Naive thymus-derived CD4-positive, alpha-beta T cell (primary cell): ENCODE measurements at regions of chr1 and their contacts with region 1.

Region 1: DNA sequence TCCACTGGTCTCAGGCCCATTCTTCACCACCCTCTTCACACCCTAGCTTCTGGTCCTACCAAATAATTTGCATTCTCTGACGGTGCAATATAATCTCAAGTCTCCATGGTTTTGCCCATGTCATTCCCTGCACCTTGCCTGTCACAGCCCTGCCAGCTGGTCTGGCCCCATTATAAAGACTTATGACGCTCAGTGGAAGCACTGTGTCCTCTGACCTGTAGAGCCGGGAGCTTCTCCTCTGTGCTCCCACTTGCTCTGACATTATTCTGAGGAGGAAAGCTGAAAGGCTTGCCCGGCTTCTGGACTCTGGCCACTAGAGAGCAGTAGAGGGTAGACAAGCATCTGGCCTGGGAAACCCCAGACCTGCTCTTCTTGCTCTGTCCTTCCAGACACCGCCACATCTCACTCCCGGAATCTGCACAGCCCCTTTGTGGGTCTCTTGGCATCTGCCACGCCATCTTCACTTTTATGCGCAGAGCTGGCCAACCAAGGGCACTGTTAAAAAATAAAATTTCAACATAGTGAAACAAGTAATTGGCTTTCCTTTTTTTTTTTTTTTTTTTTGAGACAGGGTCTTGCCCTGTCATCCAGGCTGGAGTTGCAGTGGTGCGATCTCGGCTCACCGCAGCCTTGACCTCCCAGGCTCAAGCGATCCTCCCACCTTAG is 44.4 kb downstream of the NENF start:
- DNase-seq: peak; percentile 34 to 72 (median 65)
- ATAC-seq: peak; percentile 96
- H3K4me3 ChIP-seq: no peak overlapping the region
- H3K4me3 Mint-ChIP-seq: peak overlapping the region in 7 of 10 donors; percentile 12 to 65 (median 43)
- H3K27ac ChIP-seq: no peak overlapping the region
- H3K27ac Mint-ChIP-seq: peak overlapping the region in 1 of 9 donors; percentile 35
- H3K4me1 ChIP-seq: peaks cover 0 to 12% of the 10 kb centered on the region in 2 donors
- H3K4me1 Mint-ChIP-seq: peaks cover 3 to 22% (median 13%) of the 10 kb centered on the region in 7 donors
- H3K27me3 ChIP-seq: no peaks in the 10 kb centered on the region
- H3K27me3 Mint-ChIP-seq: peaks cover 0 to 30% (median 4%) of the 10 kb centered on the region in 5 donors

Region 2: DNA sequence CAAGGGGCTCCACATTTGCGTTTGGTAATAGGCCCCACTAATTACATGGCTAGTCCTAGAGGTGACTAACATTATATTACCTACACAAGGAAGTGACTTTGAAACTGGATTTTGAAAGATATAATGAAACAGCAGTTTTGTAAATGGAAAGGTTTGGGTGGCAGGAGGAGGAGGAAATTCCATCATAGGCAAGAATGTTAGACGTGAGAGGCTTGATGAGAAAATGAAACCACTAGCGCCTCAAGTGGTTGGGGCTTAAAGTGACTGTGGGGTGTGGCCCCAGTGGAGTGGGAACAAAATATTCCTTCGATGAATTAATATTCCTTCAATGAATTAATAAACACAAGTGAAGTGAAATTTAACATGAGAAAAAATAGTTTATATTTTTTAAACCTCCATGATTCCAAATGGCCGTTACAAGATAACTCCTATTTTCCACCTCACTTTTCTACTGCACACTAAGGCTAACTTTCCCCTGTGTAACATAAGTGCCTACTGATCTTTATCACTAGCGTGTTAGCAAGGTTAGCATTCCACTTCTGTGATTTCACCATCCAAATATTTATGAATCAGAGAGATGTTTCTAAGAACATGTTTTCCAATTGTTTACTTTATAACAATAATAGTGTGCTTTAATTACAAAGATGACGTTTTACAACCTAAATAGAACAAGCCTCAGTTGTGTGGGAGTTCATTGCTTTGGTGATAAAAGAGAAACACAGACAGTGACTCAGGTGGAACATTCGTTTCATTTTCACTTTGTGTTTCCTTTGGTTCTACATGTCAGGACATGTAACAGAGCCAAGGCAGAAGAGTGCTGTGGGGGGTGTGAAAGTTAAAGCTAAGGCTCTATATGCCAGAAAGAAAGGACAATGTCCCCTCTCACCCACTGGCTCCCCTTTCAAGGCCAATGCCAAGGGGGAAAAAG is 118.9 kb after region 1 on chr1:
- CTCF ChIA-PET with region 1: interaction called, 3 read pairs
- POLR2A ChIA-PET with region 1: no interaction called
- intact Hi-C with region 1: loop called (anchors 1 to 10 kb)
- DNase-seq: peak in 7 of 9 donors; percentile 28 to 78 (median 50)
- ATAC-seq: peak; percentile 94
- H3K4me3 ChIP-seq: peak overlapping the region; percentile 14
- H3K4me3 Mint-ChIP-seq: peak overlapping the region; percentile 4 to 84 (median 72)
- H3K27ac ChIP-seq: no peak overlapping the region
- H3K27ac Mint-ChIP-seq: peak overlapping the region; percentile 19 to 99 (median 79)
- H3K4me1 ChIP-seq: peaks cover 8 to 11% of the 10 kb centered on the region in 2 donors
- H3K4me1 Mint-ChIP-seq: peaks cover 0 to 27% (median 14%) of the 10 kb centered on the region in 7 donors
- H3K27me3 ChIP-seq: no peaks in the 10 kb centered on the region
- H3K27me3 Mint-ChIP-seq: peaks cover 8 to 19% (median 12%) of the 10 kb centered on the region in 5 donors

Region 3: DNA sequence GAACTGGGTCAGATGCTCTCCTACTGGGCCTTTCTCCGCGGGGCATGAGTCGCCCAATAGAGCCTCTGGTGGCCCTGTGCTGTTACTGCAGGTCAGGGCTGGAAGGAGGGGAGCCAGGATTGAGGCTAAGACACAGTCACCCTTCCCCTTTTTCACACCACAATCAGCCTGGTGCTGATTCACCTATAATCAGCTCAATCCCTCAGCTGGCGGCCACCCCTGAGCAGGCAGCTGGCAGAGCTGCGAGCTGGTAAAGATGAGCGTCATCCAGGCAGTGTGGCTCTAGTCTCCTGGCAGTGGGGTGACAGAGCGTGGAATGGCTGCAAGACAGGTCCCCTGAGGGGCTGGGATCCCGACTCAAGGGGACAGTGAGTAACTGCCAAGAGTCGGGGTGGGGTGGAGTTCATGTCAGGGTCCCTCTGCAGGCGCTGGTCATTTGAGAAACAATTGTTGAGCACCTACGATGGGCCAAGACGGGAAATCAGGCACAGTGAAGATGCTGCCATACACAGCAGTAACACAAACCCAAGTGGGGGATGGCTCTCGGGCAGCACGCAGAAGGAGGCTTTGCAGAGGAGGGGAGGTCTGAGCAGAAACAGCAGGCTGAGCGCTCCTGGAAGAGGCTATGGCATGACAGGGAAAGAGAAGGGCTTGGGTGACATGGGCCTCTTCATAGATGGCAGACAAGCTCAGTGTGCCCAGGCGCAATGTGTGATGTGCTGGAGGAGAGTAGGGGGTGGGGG is 153.2 kb after region 1 on chr1:
- CTCF ChIA-PET with region 1: interaction called, 3 read pairs
- POLR2A ChIA-PET with region 1: no interaction called
- intact Hi-C with region 1: loop called (anchors 1 kb)
- DNase-seq: peak in 8 of 9 donors; percentile 26 to 59 (median 44)
- ATAC-seq: peak; percentile 97
- H3K4me3 ChIP-seq: no peak overlapping the region
- H3K4me3 Mint-ChIP-seq: no peak overlapping the region
- H3K27ac ChIP-seq: no peak overlapping the region
- H3K27ac Mint-ChIP-seq: no peak overlapping the region
- H3K4me1 ChIP-seq: peaks cover 0 to 2% of the 10 kb centered on the region in 2 donors
- H3K4me1 Mint-ChIP-seq: peaks cover 0 to 14% (median 5%) of the 10 kb centered on the region in 7 donors
- H3K27me3 ChIP-seq: no peaks in the 10 kb centered on the region
- H3K27me3 Mint-ChIP-seq: peaks cover 0 to 16% (median 6%) of the 10 kb centered on the region in 5 donors

Region 4: DNA sequence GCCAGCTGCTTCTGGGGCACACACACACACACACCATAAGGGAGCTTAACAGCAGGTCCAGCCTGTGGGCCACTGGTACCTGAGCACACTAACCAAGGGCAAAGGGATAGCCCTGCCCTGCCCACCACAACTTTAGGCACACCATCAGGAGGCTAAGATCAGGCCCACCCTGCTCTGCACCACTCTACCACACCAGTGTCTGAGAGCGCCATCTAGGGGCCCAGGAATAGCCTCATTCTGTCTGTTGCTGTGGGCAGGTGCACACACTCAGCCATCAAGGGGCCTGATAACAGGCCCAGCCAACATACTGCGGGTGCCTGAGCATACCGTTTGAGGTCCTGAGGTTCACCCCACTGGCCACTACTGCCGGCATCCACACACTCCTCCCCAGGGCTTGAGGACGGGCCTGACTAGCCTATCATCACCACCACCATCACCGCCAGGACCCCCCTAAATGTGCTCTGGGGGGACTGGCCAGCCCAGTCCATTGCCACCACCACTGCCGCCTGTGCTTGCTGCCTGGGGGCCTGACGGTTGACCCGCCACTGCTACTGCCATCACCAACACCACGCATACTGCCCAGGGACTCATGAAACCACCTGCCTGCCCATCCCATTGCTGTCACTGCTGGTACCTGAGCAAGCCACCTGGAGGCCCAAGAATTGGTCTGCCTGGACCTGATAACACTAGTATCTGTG is 283.1 kb after region 1 on chr1:
- CTCF ChIA-PET with region 1: no interaction called
- POLR2A ChIA-PET with region 1: no interaction called
- intact Hi-C with region 1: loop called (anchors 5 kb)
- DNase-seq: peak in 7 of 9 donors; percentile 16 to 49 (median 41)
- ATAC-seq: peak; percentile 87
- H3K4me3 ChIP-seq: no peak overlapping the region
- H3K4me3 Mint-ChIP-seq: peak overlapping the region in 1 of 10 donors; percentile 21
- H3K27ac ChIP-seq: no peak overlapping the region
- H3K27ac Mint-ChIP-seq: peak overlapping the region in 1 of 9 donors; percentile 25
- H3K4me1 ChIP-seq: no peaks in the 10 kb centered on the region
- H3K4me1 Mint-ChIP-seq: peaks cover 8 to 64% (median 30%) of the 10 kb centered on the region in 7 donors
- H3K27me3 ChIP-seq: no peaks in the 10 kb centered on the region
- H3K27me3 Mint-ChIP-seq: no peaks in the 10 kb centered on the region

Region 5: DNA sequence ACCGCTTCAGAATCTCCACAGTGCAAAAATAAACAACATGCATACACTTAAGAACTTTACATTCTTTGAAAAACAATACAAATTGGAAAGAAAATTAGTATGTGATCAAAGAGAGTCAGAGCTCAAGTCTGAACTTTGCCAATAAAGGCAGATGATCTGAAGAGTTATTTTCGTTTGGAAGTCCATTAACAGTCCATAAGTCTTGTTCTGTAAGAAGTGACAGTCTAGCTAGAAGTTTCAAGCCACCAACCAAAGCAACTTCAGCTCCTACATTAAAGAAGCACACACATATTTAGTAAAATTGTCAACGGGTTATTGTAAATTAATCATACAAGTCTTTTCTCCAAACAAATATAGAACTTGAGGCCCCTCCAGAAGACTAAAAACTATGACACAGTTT is 517.8 kb after region 1 on chr1:
- CTCF ChIA-PET with region 1: interaction called, 11 read pairs
- POLR2A ChIA-PET with region 1: no interaction called
- intact Hi-C with region 1: loop called in 1 of 2 experiments (anchors 2 kb)
- DNase-seq: no peak
- ATAC-seq: no peak
- H3K4me3 ChIP-seq: no peak overlapping the region
- H3K4me3 Mint-ChIP-seq: no peak overlapping the region
- H3K27ac ChIP-seq: no peak overlapping the region
- H3K27ac Mint-ChIP-seq: no peak overlapping the region
- H3K4me1 ChIP-seq: no peaks in the 10 kb centered on the region
- H3K4me1 Mint-ChIP-seq: peaks cover 0 to 12% (median 7%) of the 10 kb centered on the region in 7 donors
- H3K27me3 ChIP-seq: no peaks in the 10 kb centered on the region
- H3K27me3 Mint-ChIP-seq: no peaks in the 10 kb centered on the region